CD8-positive, alpha-beta T cell (primary cell): ENCODE measurements at regions of chr21 and their contacts with region 1.

Region 1: GRCh38 chr21:38219049-38219628 is 37.7 kb upstream of the KCNJ15 start:
- DNase-seq: peak; percentile 13 to 70 (median 52)
- ATAC-seq: peak; percentile 64
- H3K4me3 ChIP-seq: no peak overlapping the region
- H3K4me3 Mint-ChIP-seq: no peak overlapping the region
- H3K27ac ChIP-seq: no peak overlapping the region
- H3K27ac Mint-ChIP-seq: no peak overlapping the region
- H3K4me1 ChIP-seq: no peaks in the 10 kb centered on the region
- H3K4me1 Mint-ChIP-seq: no peaks in the 10 kb centered on the region
- H3K27me3 ChIP-seq: no peaks in the 10 kb centered on the region
- H3K27me3 Mint-ChIP-seq: peaks cover 5% of the 10 kb centered on the region
- CTCF ChIP-seq: peak; percentile 86

Region 2: GRCh38 chr21:37916310-37917051 is 302.7 kb before region 1 on chr21 and contains the start of gene KCNJ6:
- CTCF ChIA-PET with region 1: no interaction called
- POLR2A ChIA-PET with region 1: no interaction called
- intact Hi-C with region 1: no loop called
- DNase-seq: no peak
- ATAC-seq: no peak
- H3K4me3 ChIP-seq: no peak within 1 kb of the TSS
- H3K4me3 Mint-ChIP-seq: no peak within 1 kb of the TSS
- H3K27ac ChIP-seq: no peak within 1 kb of the TSS
- H3K27ac Mint-ChIP-seq: no peak within 1 kb of the TSS
- H3K4me1 ChIP-seq: no peaks in the 10 kb centered on the region
- H3K4me1 Mint-ChIP-seq: peaks cover 11% of the 10 kb centered on the region
- H3K27me3 ChIP-seq: peaks cover 4 to 8% of the 10 kb centered on the region in 2 experiments
- H3K27me3 Mint-ChIP-seq: peaks cover 50% of the 10 kb centered on the region
- CTCF ChIP-seq: no peak
- total RNA-seq, gene KCNJ6: not detected

Region 3: DNA sequence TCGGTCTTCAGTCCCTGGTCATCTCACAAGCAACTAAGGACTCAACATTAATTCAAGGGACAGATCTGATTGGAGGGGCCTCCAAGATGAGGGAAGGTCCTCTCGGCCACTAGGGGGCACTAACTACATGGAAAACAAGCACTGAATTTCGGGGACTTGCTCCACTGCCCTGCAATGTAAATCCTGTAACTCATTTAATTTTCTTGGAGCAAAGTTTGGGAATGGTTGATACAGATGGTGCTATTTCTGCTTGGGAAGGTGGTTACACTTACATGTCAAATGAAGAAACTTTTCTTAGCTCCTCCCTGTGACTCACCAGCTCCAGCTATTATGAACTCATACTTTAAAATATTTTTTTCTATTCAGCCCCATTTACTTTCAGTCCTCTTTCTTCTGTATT is 59.8 kb before region 1 on chr21:
- CTCF ChIA-PET with region 1: interaction called, 3 read pairs
- POLR2A ChIA-PET with region 1: no interaction called
- intact Hi-C with region 1: loop called in 1 of 2 experiments (anchors 1 kb)
- DNase-seq: peak in 8 of 9 experiments; percentile 21 to 62 (median 46)
- ATAC-seq: no peak
- H3K4me3 ChIP-seq: no peak overlapping the region
- H3K4me3 Mint-ChIP-seq: no peak overlapping the region
- H3K27ac ChIP-seq: no peak overlapping the region
- H3K27ac Mint-ChIP-seq: no peak overlapping the region
- H3K4me1 ChIP-seq: no peaks in the 10 kb centered on the region
- H3K4me1 Mint-ChIP-seq: no peaks in the 10 kb centered on the region
- H3K27me3 ChIP-seq: no peaks in the 10 kb centered on the region
- H3K27me3 Mint-ChIP-seq: peaks cover 21% of the 10 kb centered on the region
- CTCF ChIP-seq: peak; percentile 62

Region 4: GRCh38 chr21:38236232-38236631 is 17.1 kb after region 1 on chr21:
- CTCF ChIA-PET with region 1: interaction called, 13 read pairs
- POLR2A ChIA-PET with region 1: no interaction called
- intact Hi-C with region 1: no loop called
- DNase-seq: no peak
- ATAC-seq: no peak
- H3K4me3 ChIP-seq: no peak overlapping the region
- H3K4me3 Mint-ChIP-seq: no peak overlapping the region
- H3K27ac ChIP-seq: no peak overlapping the region
- H3K27ac Mint-ChIP-seq: no peak overlapping the region
- H3K4me1 ChIP-seq: no peaks in the 10 kb centered on the region
- H3K4me1 Mint-ChIP-seq: no peaks in the 10 kb centered on the region
- H3K27me3 ChIP-seq: no peaks in the 10 kb centered on the region
- H3K27me3 Mint-ChIP-seq: no peaks in the 10 kb centered on the region
- CTCF ChIP-seq: no peak

Region 5: DNA sequence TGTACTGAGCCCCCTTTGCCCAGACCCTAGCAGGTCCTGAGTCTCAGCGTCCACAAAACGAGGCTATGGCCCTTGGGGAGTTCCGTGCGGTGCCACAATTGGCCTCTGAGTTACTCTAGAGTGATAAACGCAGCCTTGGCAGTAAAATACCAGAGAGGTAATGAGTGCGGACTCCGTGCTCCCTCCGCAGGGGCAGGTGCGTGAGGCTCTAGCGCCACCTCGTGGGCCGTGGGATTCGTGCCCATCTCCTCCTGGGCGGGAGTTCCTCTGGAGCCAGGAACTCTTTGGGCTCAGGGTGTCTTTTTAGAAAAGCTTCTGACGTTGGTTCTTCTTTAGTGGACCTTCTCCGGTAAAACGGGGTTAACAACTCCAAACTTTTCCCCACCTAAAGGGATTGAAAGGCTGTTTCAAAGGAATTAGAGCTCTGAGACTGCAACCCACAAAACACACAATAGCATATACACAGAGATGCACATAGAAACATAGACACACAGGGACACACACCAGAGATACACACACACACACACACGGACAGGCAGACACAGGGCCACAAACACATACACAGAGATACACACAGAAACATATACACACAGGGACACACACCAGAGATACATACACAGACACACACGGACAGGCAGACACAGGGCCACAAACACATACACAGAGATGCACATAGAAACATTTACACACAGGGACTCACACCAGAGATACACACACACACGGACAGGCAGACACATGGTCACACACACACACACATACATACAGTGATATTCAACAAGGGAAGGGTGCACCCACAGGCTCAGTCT is 137.1 kb after region 1 on chr21:
- CTCF ChIA-PET with region 1: interaction called, 38 read pairs
- POLR2A ChIA-PET with region 1: interaction called, 3 read pairs
- intact Hi-C with region 1: loop called (anchors 1 kb)
- DNase-seq: peak; percentile 21 to 78 (median 59)
- ATAC-seq: peak; percentile 62
- H3K4me3 ChIP-seq: no peak overlapping the region
- H3K4me3 Mint-ChIP-seq: no peak overlapping the region
- H3K27ac ChIP-seq: no peak overlapping the region
- H3K27ac Mint-ChIP-seq: no peak overlapping the region
- H3K4me1 ChIP-seq: no peaks in the 10 kb centered on the region
- H3K4me1 Mint-ChIP-seq: no peaks in the 10 kb centered on the region
- H3K27me3 ChIP-seq: no peaks in the 10 kb centered on the region
- H3K27me3 Mint-ChIP-seq: peaks cover 12% of the 10 kb centered on the region
- CTCF ChIP-seq: peak; percentile 68

Region 6: GRCh38 chr21:39175154-39175553 is 956.0 kb after region 1 on chr21:
- CTCF ChIA-PET with region 1: no interaction called
- POLR2A ChIA-PET with region 1: no interaction called
- intact Hi-C with region 1: loop called in 1 of 2 experiments (anchors 10 kb)
- DNase-seq: peak in 2 of 9 experiments; percentile 25 to 34
- ATAC-seq: no peak
- H3K4me3 ChIP-seq: no peak overlapping the region
- H3K4me3 Mint-ChIP-seq: no peak overlapping the region
- H3K27ac ChIP-seq: no peak overlapping the region
- H3K27ac Mint-ChIP-seq: no peak overlapping the region
- H3K4me1 ChIP-seq: peaks cover 2% of the 10 kb centered on the region
- H3K4me1 Mint-ChIP-seq: peaks cover 2% of the 10 kb centered on the region
- H3K27me3 ChIP-seq: no peaks in the 10 kb centered on the region
- H3K27me3 Mint-ChIP-seq: no peaks in the 10 kb centered on the region
- CTCF ChIP-seq: peak; percentile 66